Transverse colon (tissue), 4 donors: ENCODE measurements at regions of chr7 and their contacts with region 1.

Region 1: GRCh38 chr7:86939197-86939814 is 120.1 kb downstream of the ELAPOR2 start:
- DNase-seq: peak; percentile 37
- H3K4me3 ChIP-seq: no peak overlapping the region
- H3K27ac ChIP-seq: no peak overlapping the region
- H3K4me1 ChIP-seq: peaks cover 0 to 5% (median 0%) of the 10 kb centered on the region in 4 donors
- H3K27me3 ChIP-seq: no peaks in the 10 kb centered on the region
- CTCF ChIP-seq: peak; percentile 66 to 83 (median 73)
- EP300 ChIP-seq: no peak
- POLR2A ChIP-seq: no peak

Region 2: DNA sequence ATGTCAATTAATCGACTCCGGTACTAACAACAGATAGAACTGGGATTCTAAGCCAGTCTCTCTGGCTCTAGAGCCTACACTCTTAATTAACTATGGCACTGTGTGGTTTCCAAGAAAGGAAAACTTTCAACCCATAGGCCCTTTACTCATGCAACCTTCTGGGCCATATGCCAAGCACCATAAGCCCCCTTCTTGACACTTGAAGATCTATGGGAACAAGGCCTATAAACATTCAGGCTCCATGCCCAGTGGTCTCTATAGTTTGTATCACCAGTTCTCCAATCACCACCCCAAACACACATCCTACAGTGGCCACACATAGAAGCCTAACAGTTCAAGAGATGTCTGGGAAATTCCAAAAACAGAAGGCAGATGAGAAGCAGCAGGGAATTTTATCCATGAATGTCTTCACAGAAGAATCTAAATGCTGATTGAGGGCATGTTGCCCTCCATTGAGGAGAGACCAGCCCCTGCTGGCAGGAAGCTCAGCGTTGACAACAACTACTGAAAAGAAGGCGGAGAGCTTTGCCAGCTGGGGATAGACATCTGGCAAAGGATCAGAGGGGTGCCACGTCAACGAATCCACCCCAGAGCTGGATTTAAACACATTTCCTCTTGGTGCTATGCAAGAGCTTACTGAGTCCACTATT is 231.2 kb before region 1 on chr7:
- in situ Hi-C with region 1: no loop called
- intact Hi-C with region 1: no loop called
- DNase-seq: no peak
- H3K4me3 ChIP-seq: no peak overlapping the region
- H3K27ac ChIP-seq: no peak overlapping the region
- H3K4me1 ChIP-seq: no peaks in the 10 kb centered on the region
- H3K27me3 ChIP-seq: no peaks in the 10 kb centered on the region
- CTCF ChIP-seq: no peak
- EP300 ChIP-seq: no peak
- POLR2A ChIP-seq: no peak

Region 3: GRCh38 chr7:87129848-87130247 is 190.5 kb after region 1 on chr7:
- in situ Hi-C with region 1: loop called in 2 of 4 experiments (anchors 10 kb)
- intact Hi-C with region 1: no loop called
- DNase-seq: no peak
- H3K4me3 ChIP-seq: no peak overlapping the region
- H3K27ac ChIP-seq: no peak overlapping the region
- H3K4me1 ChIP-seq: no peaks in the 10 kb centered on the region
- H3K27me3 ChIP-seq: no peaks in the 10 kb centered on the region
- CTCF ChIP-seq: no peak
- EP300 ChIP-seq: no peak
- POLR2A ChIP-seq: no peak

Region 4: GRCh38 chr7:87148332-87148955 is 209.1 kb after region 1 on chr7:
- in situ Hi-C with region 1: loop called in 1 of 4 experiments (anchors 10 kb)
- intact Hi-C with region 1: no loop called
- DNase-seq: no peak
- H3K4me3 ChIP-seq: no peak overlapping the region
- H3K27ac ChIP-seq: no peak overlapping the region
- H3K4me1 ChIP-seq: peaks cover 0 to 22% (median under 1%) of the 10 kb centered on the region in 4 donors
- H3K27me3 ChIP-seq: no peaks in the 10 kb centered on the region
- CTCF ChIP-seq: peak; percentile 39 to 53 (median 45)
- EP300 ChIP-seq: no peak
- POLR2A ChIP-seq: no peak

Region 5: GRCh38 chr7:87231256-87231655 is 291.9 kb after region 1 on chr7:
- in situ Hi-C with region 1: loop called (anchors 10 kb)
- intact Hi-C with region 1: no loop called
- DNase-seq: no peak
- H3K4me3 ChIP-seq: no peak overlapping the region
- H3K27ac ChIP-seq: no peak overlapping the region
- H3K4me1 ChIP-seq: no peaks in the 10 kb centered on the region
- H3K27me3 ChIP-seq: peaks cover 6% of the 10 kb centered on the region
- CTCF ChIP-seq: no peak
- EP300 ChIP-seq: no peak
- POLR2A ChIP-seq: no peak